ENCODE measurements at regions of chr2 and their contacts with region 1.

Region 1: GRCh38 chr2:190701586-190701985 is 52.7 kb downstream of the NAB1 start:
- DNase-seq: no peak
- CTCF ChIP-seq: no peak

Region 2: GRCh38 chr2:190583507-190584337 is 117.9 kb before region 1 on chr2:
- CTCF ChIA-PET with region 1: no interaction called
- POLR2A ChIA-PET with region 1: no interaction called
- DNase-seq: no peak
- CTCF ChIP-seq: no peak

Region 3: DNA sequence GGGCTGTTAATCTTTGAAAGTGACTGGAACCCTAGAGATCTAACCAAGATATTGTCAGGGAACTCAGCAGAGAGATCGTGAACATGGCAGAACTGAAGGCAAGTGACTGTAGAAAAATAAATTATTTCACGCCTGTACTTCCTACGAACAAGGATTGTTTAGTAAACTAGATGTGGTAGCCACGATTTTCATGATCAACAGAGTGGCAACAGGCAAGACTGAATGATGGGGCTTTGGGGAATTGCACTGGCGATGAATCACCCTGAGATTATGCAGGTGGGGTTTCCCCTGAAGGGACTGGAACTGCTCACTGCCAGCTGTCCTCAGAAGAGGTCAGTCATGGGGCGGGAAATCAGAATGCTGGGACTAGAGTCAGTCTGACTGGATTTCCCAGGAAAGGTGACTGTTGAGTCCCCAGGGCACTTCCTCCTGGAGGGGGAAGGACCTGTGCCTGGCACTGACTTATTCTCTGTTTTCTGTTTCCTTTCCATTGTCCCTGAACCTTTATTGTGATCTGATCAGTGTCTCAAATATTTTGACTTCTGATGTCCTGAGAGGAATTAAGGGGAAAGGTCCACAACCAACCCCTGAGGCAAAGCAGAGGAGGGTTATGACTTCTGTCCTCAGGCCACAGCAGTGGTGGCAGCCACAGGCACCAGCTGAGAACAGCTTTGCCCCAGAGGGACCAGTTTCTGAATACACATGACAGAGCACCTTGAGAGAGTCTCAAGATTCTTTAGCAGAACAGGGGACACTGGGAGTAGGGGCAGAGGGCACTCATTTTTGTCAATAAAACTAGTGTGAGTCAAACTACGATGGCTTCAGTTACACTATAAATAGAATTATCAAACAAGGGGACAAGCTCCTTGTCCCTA is 17.3 kb after region 1 on chr2:
- CTCF ChIA-PET with region 1: interaction called, 13 read pairs
- POLR2A ChIA-PET with region 1: interaction called, 3 read pairs
- DNase-seq: peak; percentile 67
- CTCF ChIP-seq: peak; percentile 12